Dorsolateral prefrontal cortex (tissue), 120 donors: ENCODE measurements at regions of chr16 and their contacts with region 1.

Region 1: GRCh38 chr16:3400779-3401688 is at the starts of genes ZNF174 and ZSCAN32:
- DNase-seq: peak; percentile 98 to 99 (median 99)
- H3K4me3 ChIP-seq: peak within 1 kb of the TSS; percentile 72 to 100 (median 93)
- H3K27ac ChIP-seq: peak within 1 kb of the TSS in 57 of 59 donors; percentile 30 to 93 (median 81)
- H3K27me3 ChIP-seq: no peaks in the 10 kb centered on the region
- CTCF ChIP-seq: peak in 52 of 56 donors; percentile 12 to 76 (median 52)
- total RNA-seq, gene ZNF174: 10.1 to 18.8 (median 14.4) TPM
- total RNA-seq, gene ZSCAN32: 6.9 to 23.5 (median 13.2) TPM

Region 2: GRCh38 chr16:3106205-3106928 is 294.7 kb before region 1 on chr16:
- intact Hi-C with region 1: no loop called
- DNase-seq: peak; percentile 75 to 95 (median 88)
- H3K4me3 ChIP-seq: peak overlapping the region; percentile 46 to 86 (median 72)
- H3K27ac ChIP-seq: peak overlapping the region in 56 of 59 donors; percentile 21 to 90 (median 81)
- H3K27me3 ChIP-seq: peaks cover 0 to 13% (median 0%) of the 10 kb centered on the region in 45 donors
- CTCF ChIP-seq: peak in 12 of 56 donors; percentile 5 to 45 (median 22)

Region 3: GRCh38 chr16:3214904-3215600 is 186.0 kb before region 1 on chr16:
- intact Hi-C with region 1: no loop called
- DNase-seq: no peak
- H3K4me3 ChIP-seq: no peak overlapping the region
- H3K27ac ChIP-seq: no peak overlapping the region
- H3K27me3 ChIP-seq: peaks cover 0 to 6% (median 0%) of the 10 kb centered on the region in 45 donors
- CTCF ChIP-seq: no peak

Region 4: DNA sequence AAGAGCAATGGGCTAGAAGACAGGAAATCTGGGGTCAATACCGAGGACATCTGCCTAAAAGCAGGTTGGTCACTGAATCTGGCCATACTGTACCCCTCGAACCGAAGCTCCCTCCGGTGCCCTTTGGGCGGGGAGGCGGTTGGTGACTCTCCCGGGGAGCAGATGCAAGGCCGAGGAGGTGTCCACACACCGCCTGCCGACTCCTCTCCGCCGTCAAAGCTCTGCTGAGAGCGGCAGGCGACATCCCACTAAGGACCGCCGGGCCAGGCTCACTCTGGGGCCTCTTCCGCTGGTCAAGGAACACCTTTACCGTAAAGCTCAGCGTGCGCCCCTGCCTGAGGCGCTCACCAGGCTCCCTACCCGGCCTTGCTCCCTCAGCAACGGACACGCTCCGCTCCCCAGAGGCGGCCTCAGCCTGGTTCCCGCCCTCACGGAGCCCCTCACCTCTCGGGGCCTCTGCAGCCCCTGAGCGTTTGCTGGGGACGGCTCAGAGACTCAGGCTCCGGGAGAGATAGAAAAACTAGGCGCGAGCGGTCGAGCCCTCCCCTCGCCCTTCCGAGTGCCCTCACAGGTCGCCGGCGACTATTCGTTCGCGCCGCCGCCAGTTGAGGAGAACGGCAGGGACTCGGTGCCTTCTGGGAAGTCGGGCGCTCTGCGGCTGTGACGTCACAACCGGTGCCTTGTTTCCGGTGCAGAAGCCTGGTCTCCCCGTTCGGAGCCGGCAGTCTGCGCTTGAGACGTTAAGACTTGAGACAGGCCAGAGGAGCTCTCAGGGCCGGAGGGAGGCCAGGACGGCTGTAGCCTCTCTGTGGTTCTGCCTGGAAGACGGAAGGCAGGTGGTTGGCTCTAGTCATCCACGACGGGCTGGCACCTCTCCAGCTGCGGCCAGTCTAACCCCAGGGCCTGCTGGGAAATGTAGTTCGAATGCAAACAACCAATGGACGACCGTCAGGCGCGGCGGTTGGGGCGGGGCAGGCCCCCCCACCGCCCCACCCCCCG is 166.2 kb before region 1 on chr16 and contains the start of gene ZNF200:
- intact Hi-C with region 1: loop called in 1 of 2 experiments (anchors 10 kb)
- DNase-seq: peak; percentile 95 to 97 (median 95)
- H3K4me3 ChIP-seq: peak within 1 kb of the TSS; percentile 66 to 100 (median 93)
- H3K27ac ChIP-seq: peak within 1 kb of the TSS; percentile 88 to 100 (median 98)
- H3K27me3 ChIP-seq: no peaks in the 10 kb centered on the region
- CTCF ChIP-seq: peak in 24 of 56 donors; percentile 11 to 51 (median 28)
- total RNA-seq, gene ZNF200: 3.7 to 13.3 (median 8.7) TPM

Region 5: GRCh38 chr16:3457434-3458252 is 56.6 kb after region 1 on chr16:
- intact Hi-C with region 1: loop called (anchors 2 kb)
- DNase-seq: peak; percentile 83 to 94 (median 90)
- H3K4me3 ChIP-seq: peak overlapping the region; percentile 62 to 97 (median 88)
- H3K27ac ChIP-seq: peak overlapping the region; percentile 84 to 100 (median 99)
- H3K27me3 ChIP-seq: no peaks in the 10 kb centered on the region
- CTCF ChIP-seq: peak in 53 of 56 donors; percentile 23 to 77 (median 48)

Region 6: GRCh38 chr16:3503523-3503922 is 102.5 kb after region 1 on chr16:
- intact Hi-C with region 1: loop called in 1 of 2 experiments (anchors 2 kb)
- DNase-seq: peak in 1 of 10 donors; percentile 12
- H3K4me3 ChIP-seq: no peak overlapping the region
- H3K27ac ChIP-seq: no peak overlapping the region
- H3K27me3 ChIP-seq: no peaks in the 10 kb centered on the region
- CTCF ChIP-seq: no peak

Region 7: DNA sequence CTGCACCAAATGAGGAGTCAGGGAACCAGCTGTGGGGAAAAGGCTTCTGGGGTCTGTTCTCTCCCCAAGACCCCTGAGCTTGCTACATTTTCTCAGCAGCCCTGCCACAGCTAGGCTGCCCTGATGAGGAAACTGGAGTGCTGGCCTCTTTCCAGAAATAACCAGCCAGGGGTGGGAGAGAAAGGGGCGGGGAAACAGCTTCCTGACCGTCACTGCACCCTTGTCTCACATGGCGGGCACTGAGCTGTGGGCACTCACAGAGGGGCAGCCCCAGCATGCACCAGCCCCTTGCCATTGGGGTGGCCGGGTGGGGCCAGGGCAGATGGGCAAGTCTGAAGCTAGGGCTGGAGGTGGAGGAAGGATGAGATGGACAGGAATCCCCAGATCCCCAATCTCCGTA is 838.0 kb after region 1 on chr16:
- intact Hi-C with region 1: no loop called
- DNase-seq: no peak
- H3K4me3 ChIP-seq: peak overlapping the region in 5 of 59 donors; percentile 3 to 32 (median 20)
- H3K27ac ChIP-seq: no peak overlapping the region
- H3K27me3 ChIP-seq: peaks cover 0 to 3% (median 0%) of the 10 kb centered on the region in 45 donors
- CTCF ChIP-seq: no peak